Vagina (tissue), 2 donors: ENCODE measurements at regions of chr5 and their contacts with region 1.

Region 1: DNA sequence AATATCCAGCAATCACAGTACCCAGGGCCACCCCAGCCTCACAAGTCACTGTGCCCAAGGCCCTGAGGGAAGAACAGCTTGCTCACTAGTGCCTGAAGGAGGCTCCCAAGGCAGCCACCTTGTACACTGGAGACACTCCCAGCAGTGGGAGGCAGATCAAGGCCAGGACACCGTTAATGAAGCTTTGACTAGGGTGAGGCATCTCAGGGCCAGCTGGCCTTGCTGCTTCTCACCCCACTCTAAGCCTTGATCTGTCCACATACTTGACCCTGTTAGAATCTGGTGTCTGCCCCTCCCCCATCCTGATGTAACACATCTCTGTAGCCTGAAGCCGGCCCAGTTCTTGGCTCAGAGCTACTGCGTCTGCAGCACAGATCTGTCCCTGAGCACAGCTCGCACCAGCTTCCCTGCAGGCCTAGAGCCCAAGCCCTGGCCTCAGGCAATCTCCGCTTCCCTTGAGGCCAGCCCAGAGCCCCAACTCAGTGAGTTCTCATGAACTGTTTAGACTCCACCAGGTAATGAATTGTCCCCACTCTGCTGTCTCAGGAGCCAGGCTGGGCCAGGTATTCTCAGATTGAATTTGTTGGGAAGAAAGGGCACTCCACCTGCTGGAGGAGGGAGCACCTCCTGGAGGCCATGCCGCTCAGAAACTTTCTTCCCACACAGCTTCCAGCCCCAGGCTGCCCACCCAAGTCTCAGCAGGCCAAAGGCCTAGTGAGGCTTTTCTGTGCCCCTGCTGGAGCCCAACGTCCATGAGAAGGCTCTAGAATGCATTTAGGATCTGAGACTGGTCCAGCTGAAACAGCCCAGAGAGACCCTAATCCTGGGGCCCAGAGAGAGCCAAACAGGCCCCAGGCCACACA is 13.5 kb upstream of the JADE2 start:
- DNase-seq: no peak
- H3K4me3 ChIP-seq: no peak overlapping the region
- H3K27ac ChIP-seq: peak overlapping the region; percentile 33
- H3K4me1 ChIP-seq: peaks cover 18% of the 10 kb centered on the region
- H3K27me3 ChIP-seq: no peaks in the 10 kb centered on the region
- CTCF ChIP-seq: no peak
- POLR2A ChIP-seq: no peak

Region 2: GRCh38 chr5:134465816-134466240 is 46.2 kb before region 1 on chr5:
- intact Hi-C with region 1: loop called (anchors 5 kb)
- DNase-seq: no peak
- H3K4me3 ChIP-seq: peak overlapping the region; percentile 53 to 61
- H3K27ac ChIP-seq: peak overlapping the region; percentile 96
- H3K4me1 ChIP-seq: peaks cover 23% of the 10 kb centered on the region
- H3K27me3 ChIP-seq: no peaks in the 10 kb centered on the region
- CTCF ChIP-seq: no peak
- POLR2A ChIP-seq: peak in 1 of 2 donors; percentile 79

Region 3: GRCh38 chr5:134541736-134542376 is 29.8 kb after region 1 on chr5:
- intact Hi-C with region 1: no loop called
- DNase-seq: no peak
- H3K4me3 ChIP-seq: no peak overlapping the region
- H3K27ac ChIP-seq: no peak overlapping the region
- H3K4me1 ChIP-seq: peaks cover 39% of the 10 kb centered on the region
- H3K27me3 ChIP-seq: no peaks in the 10 kb centered on the region
- CTCF ChIP-seq: no peak
- POLR2A ChIP-seq: no peak